Heart left ventricle (tissue), 16 donors: ENCODE measurements at regions of chrX and their contacts with region 1.

Region 1: GRCh38 chrX:17689971-17690409 is 47.3 kb upstream of the SCML1 start:
- DNase-seq: peak in 2 of 5 donors; percentile 37 to 50
- ATAC-seq: peak in 3 of 4 donors; percentile 76 to 80 (median 77)
- H3K4me3 ChIP-seq: no peak overlapping the region
- H3K27ac ChIP-seq: no peak overlapping the region
- H3K4me1 ChIP-seq: peaks cover 0 to 4% (median 0%) of the 10 kb centered on the region in 12 donors
- H3K27me3 ChIP-seq: peaks cover 0 to 21% (median 0%) of the 10 kb centered on the region in 9 donors
- CTCF ChIP-seq: peak; percentile 52 to 75 (median 63)
- POLR2A ChIP-seq: no peak

Region 2: GRCh38 chrX:17120816-17121215 is 569.2 kb before region 1 on chrX:
- intact Hi-C with region 1: loop called in 3 of 10 experiments (anchors 10 kb)
- DNase-seq: no peak
- ATAC-seq: no peak
- H3K4me3 ChIP-seq: no peak overlapping the region
- H3K27ac ChIP-seq: no peak overlapping the region
- H3K4me1 ChIP-seq: no peaks in the 10 kb centered on the region
- H3K27me3 ChIP-seq: peaks cover 0 to 3% (median 0%) of the 10 kb centered on the region in 9 donors
- CTCF ChIP-seq: no peak
- POLR2A ChIP-seq: no peak

Region 3: GRCh38 chrX:17160971-17161370 is 529.0 kb before region 1 on chrX:
- intact Hi-C with region 1: no loop called
- DNase-seq: no peak
- ATAC-seq: no peak
- H3K4me3 ChIP-seq: no peak overlapping the region
- H3K27ac ChIP-seq: no peak overlapping the region
- H3K4me1 ChIP-seq: no peaks in the 10 kb centered on the region
- H3K27me3 ChIP-seq: no peaks in the 10 kb centered on the region
- CTCF ChIP-seq: no peak
- POLR2A ChIP-seq: no peak

Region 4: GRCh38 chrX:17374619-17375366 is 315.2 kb before region 1 on chrX and contains the start of gene NHS:
- intact Hi-C with region 1: loop called in 2 of 10 experiments (anchors 5 to 10 kb)
- DNase-seq: peak; percentile 61 to 79 (median 64)
- ATAC-seq: peak; percentile 67 to 89 (median 88)
- H3K4me3 ChIP-seq: peak within 1 kb of the TSS; percentile 26 to 67 (median 52)
- H3K27ac ChIP-seq: peak within 1 kb of the TSS in 7 of 12 donors; percentile 6 to 81 (median 39)
- H3K4me1 ChIP-seq: peaks cover 0 to 14% (median 0%) of the 10 kb centered on the region in 12 donors
- H3K27me3 ChIP-seq: peaks cover 0 to 41% (median 0%) of the 10 kb centered on the region in 9 donors
- CTCF ChIP-seq: peak in 11 of 12 donors; percentile 26 to 65 (median 43)
- POLR2A ChIP-seq: no peak
- total RNA-seq, gene NHS: 0.67 to 3.4 (median 1.7) TPM

Region 5: DNA sequence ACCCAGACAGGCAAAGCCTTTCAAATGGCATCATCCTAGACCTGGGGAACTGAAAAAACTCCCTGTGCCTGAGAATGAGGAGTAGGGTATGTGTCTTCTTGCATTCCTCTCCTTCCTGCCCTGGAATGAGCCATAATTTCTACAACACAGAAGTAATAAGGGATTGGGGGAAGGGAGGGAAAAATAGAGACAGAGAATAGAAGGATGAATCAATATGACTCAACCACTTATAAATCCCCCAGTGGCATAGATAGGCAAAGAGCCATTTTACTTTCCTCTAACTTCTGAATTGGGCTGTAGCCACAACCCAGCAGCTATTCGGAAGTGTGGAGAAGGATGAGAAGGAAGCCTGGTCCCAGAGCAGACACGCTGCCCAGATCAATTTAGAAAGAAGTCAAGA is 215.1 kb before region 1 on chrX:
- intact Hi-C with region 1: no loop called
- DNase-seq: no peak
- ATAC-seq: peak in 2 of 4 donors; percentile 9 to 49
- H3K4me3 ChIP-seq: no peak overlapping the region
- H3K27ac ChIP-seq: no peak overlapping the region
- H3K4me1 ChIP-seq: peaks cover 0 to 9% (median 0%) of the 10 kb centered on the region in 12 donors
- H3K27me3 ChIP-seq: peaks cover 0 to 7% (median 0%) of the 10 kb centered on the region in 9 donors
- CTCF ChIP-seq: no peak
- POLR2A ChIP-seq: no peak

Region 6: DNA sequence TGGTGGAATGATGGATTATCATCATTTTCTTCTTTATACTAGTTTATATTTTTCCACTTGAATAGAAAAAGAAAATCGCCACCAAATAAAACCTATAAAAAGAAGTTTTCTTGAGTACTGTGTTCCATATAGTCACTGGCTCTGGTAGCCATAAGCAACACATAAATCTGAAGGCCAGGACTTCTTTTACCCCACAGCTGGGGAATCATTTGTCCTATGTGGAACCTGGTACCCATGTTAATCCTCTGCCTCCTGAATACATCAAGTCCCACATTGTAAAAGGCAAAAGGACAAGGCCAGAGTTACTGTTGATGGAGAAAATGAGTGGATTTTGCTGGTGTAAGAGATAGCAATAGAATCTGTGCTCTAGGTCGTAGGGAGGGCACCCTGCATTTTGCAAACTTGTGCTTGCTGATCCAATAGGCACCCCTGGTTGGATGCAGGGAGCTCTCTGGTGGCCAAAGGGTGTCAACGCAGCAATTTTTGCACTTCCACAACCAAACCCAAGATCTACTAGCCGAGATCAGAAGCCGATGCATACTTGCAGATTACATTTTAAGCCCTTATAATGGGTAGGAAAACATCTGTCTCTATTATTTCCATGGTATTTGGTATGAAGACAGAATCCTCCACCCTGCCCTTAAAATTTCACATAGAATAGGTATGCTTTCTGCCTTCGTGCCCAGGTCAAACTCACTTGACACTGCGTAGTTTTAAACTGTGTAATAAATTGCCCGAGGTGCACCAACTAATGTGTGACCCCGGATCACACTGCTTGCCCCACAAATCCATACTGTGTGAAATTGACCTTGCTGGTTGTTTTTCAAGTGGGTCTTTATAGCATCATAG is 98.9 kb before region 1 on chrX:
- intact Hi-C with region 1: loop called in 5 of 10 experiments (anchors 5 to 10 kb)
- DNase-seq: peak; percentile 44 to 60 (median 52)
- ATAC-seq: peak; percentile 77 to 90 (median 83)
- H3K4me3 ChIP-seq: peak overlapping the region in 5 of 12 donors; percentile 3 to 43 (median 33)
- H3K27ac ChIP-seq: peak overlapping the region in 5 of 12 donors; percentile 3 to 72 (median 38)
- H3K4me1 ChIP-seq: peaks cover 0 to 19% (median 2%) of the 10 kb centered on the region in 12 donors
- H3K27me3 ChIP-seq: peaks cover 0 to 4% (median 0%) of the 10 kb centered on the region in 9 donors
- CTCF ChIP-seq: peak; percentile 52 to 75 (median 64)
- POLR2A ChIP-seq: no peak